GM10248 (cell line): ENCODE measurements at regions of chr2 and their contacts with region 1.

Region 1: DNA sequence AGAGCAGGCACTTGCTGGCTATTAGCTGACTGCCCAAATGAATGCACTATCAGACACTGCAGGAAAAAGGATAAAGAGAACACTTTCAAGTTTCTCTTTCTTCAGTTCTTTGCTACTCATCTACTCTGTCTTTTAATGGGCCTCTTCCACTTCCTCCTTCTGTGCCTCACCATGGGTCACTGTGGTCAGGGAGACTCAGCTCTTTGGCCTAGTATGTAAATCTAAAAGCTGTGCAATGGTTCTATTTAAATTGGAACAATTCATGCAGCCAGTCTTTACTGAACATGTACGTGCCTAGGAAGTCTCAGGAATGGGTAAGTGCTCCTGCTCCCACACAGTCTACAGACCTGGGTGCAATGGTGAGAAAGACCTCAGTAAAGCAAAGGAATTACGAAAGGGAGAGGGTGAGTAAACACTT is 79.1 kb upstream of the DNMT3A start:
- DNase-seq: peak; percentile 66
- CTCF ChIP-seq: no peak

Region 2: DNA sequence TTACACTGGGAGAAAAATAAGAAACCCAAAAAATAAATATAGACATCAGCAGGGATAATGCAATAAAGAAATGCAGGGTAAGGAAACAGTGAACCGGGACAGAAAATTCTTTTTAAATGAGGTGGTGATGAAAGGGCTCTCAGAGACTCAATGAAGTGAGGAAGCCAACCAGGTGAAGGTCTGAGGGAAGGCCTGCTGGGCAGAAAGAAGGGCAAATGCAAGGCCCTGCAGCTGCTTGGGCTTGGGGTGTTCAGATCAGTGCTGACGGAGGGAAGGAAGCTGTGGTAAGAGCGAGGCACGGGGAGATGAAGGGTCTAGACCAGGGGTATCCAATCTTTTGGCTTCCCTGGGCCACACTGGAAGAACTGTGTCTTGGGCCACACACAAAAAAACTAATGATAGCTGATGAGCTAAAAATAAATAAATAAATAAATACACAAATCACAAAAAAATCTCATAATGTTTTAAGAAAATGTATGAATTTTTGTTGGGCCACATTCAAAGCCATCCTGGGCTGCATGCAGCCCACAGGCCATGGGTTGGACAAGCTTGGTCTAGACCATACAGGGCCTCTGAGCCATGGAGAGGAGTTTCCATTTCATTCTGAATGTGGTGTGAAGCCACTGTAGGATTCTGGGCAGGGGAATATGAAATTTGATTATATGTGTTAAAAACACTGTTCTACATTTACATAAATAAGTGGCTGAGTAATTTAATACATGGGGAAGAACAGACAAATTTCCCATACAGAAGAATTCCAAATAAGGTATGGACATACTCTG is 17.2 kb after region 1 on chr2:
- CTCF ChIA-PET with region 1: interaction called, 26 read pairs
- POLR2A ChIA-PET with region 1: no interaction called
- DNase-seq: no peak
- CTCF ChIP-seq: no peak

Region 3: DNA sequence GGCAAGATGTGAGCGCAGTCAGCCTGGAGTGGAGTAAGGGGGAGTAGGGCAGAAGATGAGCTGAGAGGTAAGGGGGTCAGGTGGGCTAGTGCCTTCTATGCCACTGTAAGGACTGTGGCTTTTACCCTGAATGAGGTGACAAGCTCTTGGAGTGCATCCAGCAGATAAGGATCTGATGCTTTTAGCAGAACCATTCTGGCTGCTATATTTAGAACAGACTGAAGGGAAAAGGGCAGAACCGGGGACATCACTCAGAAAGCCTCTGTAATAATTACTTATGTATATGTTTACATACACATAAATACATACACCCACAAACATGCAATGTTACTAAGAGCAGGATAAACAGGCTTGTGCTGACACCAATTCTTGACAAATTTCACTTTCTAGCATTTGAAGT is 127.8 kb after region 1 on chr2:
- CTCF ChIA-PET with region 1: no interaction called
- POLR2A ChIA-PET with region 1: no interaction called
- DNase-seq: no peak
- CTCF ChIP-seq: no peak